ENCODE measurements at regions of chrX and their contacts with region 1.

Region 1: GRCh38 chrX:30659421-30659820 is 6.2 kb downstream of the GK start:
- DNase-seq: no peak
- H3K4me3 Mint-ChIP-seq: no peak overlapping the region
- H3K27ac Mint-ChIP-seq: peak overlapping the region; percentile 74
- H3K4me1 Mint-ChIP-seq: peaks cover 45% of the 10 kb centered on the region
- H3K27me3 Mint-ChIP-seq: no peaks in the 10 kb centered on the region

Region 2: GRCh38 chrX:30674799-30675198 is 15.4 kb after region 1 on chrX:
- CTCF ChIA-PET with region 1: interaction called, 5 read pairs
- POLR2A ChIA-PET with region 1: interaction called, 11 read pairs
- DNase-seq: no peak
- H3K4me3 Mint-ChIP-seq: no peak overlapping the region
- H3K27ac Mint-ChIP-seq: peak overlapping the region; percentile 1
- H3K4me1 Mint-ChIP-seq: no peaks in the 10 kb centered on the region
- H3K27me3 Mint-ChIP-seq: no peaks in the 10 kb centered on the region

Region 3: DNA sequence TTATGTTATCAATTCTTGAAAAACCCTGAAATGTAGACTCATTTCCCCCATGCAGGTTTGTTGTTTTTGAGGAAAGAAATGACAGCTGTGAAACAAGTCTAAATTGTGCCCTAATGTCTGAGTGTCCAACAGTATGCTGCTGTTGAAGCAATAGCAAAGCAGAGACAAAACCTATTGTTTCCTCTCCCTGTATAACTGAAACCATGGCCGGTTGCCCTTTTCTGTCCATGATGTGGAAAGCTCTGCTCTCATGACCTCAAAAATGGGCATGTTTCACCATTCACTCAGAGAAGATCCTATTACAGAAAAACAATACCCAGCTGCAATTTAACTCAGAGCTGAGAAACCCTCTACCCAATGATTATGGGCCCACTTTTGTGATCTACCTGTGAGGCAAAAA is 725.0 kb after region 1 on chrX:
- CTCF ChIA-PET with region 1: no interaction called
- POLR2A ChIA-PET with region 1: no interaction called
- DNase-seq: no peak
- H3K4me3 Mint-ChIP-seq: no peak overlapping the region
- H3K27ac Mint-ChIP-seq: no peak overlapping the region
- H3K4me1 Mint-ChIP-seq: no peaks in the 10 kb centered on the region
- H3K27me3 Mint-ChIP-seq: no peaks in the 10 kb centered on the region